HCT116 (cell line): ENCODE measurements at regions of chr1 and their contacts with region 1.

Region 1: GRCh38 chr1:44721485-44722361 is 9.2 kb downstream of the RNU5D-1 start:
- DNase-seq: peak; percentile 99
- ATAC-seq: peak; percentile 91
- H3K4me3 ChIP-seq: no peak overlapping the region
- H3K27ac ChIP-seq: peak overlapping the region; percentile 75
- H3K4me1 ChIP-seq: peaks cover 10 to 33% of the 10 kb centered on the region in 2 experiments
- H3K27me3 ChIP-seq: no peaks in the 10 kb centered on the region
- CTCF ChIP-seq: no peak
- POLR2A ChIP-seq: peak; percentile 100
- RAD21 ChIP-seq: no peak

Region 2: DNA sequence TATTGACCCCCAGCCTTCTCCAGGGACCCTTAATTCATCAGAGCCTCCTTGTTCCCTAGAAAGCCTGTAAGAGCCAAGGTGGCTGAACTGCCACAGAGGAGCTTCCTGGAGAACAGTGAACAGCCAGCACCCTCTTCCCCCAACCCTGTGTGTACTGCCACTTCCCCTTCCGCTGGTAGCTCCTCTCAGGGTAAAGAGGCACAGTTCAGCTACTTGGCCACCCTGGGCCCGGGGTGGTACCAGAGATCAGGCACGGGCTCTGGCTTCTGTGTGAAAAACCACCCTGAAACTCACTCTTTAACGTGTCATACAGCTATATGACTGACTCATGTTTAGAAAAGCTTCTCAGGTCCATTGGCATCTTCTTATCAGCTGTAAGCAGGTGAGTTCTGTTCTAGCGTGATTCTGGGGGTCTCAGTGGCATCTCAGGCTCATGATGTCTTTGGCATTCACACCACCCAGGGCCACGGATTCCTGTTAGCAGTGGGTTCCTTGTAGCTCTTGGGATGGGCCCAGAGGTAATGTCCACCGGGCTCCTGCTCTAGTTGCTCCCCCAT is 24.9 kb before region 1 on chr1:
- CTCF ChIA-PET with region 1: no interaction called
- POLR2A ChIA-PET with region 1: interaction called, 39 read pairs
- RAD21 ChIA-PET with region 1: no interaction called
- intact Hi-C with region 1: no loop called
- DNase-seq: no peak
- ATAC-seq: no peak
- H3K4me3 ChIP-seq: no peak overlapping the region
- H3K27ac ChIP-seq: no peak overlapping the region
- H3K4me1 ChIP-seq: peaks cover 0 to 27% of the 10 kb centered on the region in 2 experiments; a peak in 2 of 4 replicates
- H3K27me3 ChIP-seq: no peaks in the 10 kb centered on the region
- CTCF ChIP-seq: no peak
- POLR2A ChIP-seq: no peak
- RAD21 ChIP-seq: no peak

Region 3: GRCh38 chr1:44775078-44775929 is 53.6 kb after region 1 on chr1 and contains the start of gene RPS8:
- CTCF ChIA-PET with region 1: interaction called, 3 read pairs
- POLR2A ChIA-PET with region 1: interaction called, 20 read pairs
- RAD21 ChIA-PET with region 1: no interaction called
- intact Hi-C with region 1: no loop called
- DNase-seq: peak; percentile 85
- ATAC-seq: peak; percentile 76
- H3K4me3 ChIP-seq: peak within 1 kb of the TSS; percentile 92 to 99
- H3K27ac ChIP-seq: peak within 1 kb of the TSS; percentile 86
- H3K4me1 ChIP-seq: peaks cover 10 to 24% of the 10 kb centered on the region in 2 experiments
- H3K27me3 ChIP-seq: no peaks in the 10 kb centered on the region
- CTCF ChIP-seq: no peak
- POLR2A ChIP-seq: peak; percentile 97
- RAD21 ChIP-seq: no peak
- total RNA-seq, gene RPS8: 2,296 TPM

Region 4: GRCh38 chr1:44807262-44808062 is 85.7 kb after region 1 on chr1 and contains the start of gene DYNLT4:
- CTCF ChIA-PET with region 1: no interaction called
- POLR2A ChIA-PET with region 1: interaction called, 42 read pairs
- RAD21 ChIA-PET with region 1: no interaction called
- intact Hi-C with region 1: no loop called
- DNase-seq: peak; percentile 98
- ATAC-seq: peak; percentile 74
- H3K4me3 ChIP-seq: peak within 1 kb of the TSS; percentile 30 to 32
- H3K27ac ChIP-seq: peak within 1 kb of the TSS; percentile 98
- H3K4me1 ChIP-seq: peaks cover 58 to 96% of the 10 kb centered on the region in 2 experiments
- H3K27me3 ChIP-seq: no peaks in the 10 kb centered on the region
- CTCF ChIP-seq: no peak
- POLR2A ChIP-seq: peak; percentile 58
- RAD21 ChIP-seq: no peak
- total RNA-seq, gene DYNLT4: 0.96 TPM

Region 5: DNA sequence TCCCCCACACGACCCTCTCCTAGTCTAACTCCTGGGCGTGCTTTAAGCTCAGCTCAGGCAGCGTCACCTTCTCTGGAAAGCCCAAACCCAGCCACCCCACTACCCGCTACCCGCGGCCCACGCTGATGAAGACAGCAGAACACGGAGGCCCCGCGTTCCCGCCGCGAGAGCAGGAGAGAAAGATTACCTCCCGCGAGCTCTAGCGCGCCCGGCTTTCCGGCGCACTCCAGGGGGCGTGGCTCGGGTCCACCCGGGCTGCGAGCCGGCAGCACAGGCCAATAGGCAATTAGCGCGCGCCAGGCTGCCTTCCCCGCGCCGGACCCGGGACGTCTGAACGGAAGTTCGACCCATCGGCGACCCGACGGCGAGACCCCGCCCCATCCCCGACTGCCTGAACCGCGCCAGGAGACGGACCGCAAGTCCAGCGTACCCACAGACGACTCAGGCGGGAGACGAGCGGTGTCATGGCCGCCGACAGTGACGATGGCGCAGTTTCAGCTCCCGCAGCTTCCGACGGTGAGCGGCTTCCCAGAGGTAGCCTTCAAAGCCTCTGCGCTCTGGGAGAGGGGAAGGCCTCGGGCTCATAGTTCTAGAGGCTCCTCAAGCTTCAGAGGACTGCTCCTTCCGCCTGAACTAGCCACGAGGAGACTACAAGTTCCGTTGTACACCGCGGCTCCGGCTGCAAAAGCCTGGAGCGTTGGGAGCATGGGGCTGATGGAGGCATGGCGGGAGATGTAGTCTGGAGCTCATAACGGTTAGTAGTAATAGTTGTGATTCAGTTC is 618.3 kb after region 1 on chr1 and contains the starts of genes MUTYH and TOE1:
- CTCF ChIA-PET with region 1: no interaction called
- POLR2A ChIA-PET with region 1: interaction called, 11 read pairs
- RAD21 ChIA-PET with region 1: no interaction called
- intact Hi-C with region 1: no loop called
- DNase-seq: peak; percentile 79
- ATAC-seq: peak; percentile 90
- H3K4me3 ChIP-seq: peak within 1 kb of the TSS; percentile 93 to 94
- H3K27ac ChIP-seq: peak within 1 kb of the TSS; percentile 82
- H3K4me1 ChIP-seq: peaks cover 21 to 50% of the 10 kb centered on the region in 2 experiments
- H3K27me3 ChIP-seq: no peaks in the 10 kb centered on the region
- CTCF ChIP-seq: no peak
- POLR2A ChIP-seq: peak; percentile 46
- RAD21 ChIP-seq: no peak
- total RNA-seq, gene MUTYH: 44.8 TPM
- total RNA-seq, gene TOE1: 11.5 TPM

Region 6: DNA sequence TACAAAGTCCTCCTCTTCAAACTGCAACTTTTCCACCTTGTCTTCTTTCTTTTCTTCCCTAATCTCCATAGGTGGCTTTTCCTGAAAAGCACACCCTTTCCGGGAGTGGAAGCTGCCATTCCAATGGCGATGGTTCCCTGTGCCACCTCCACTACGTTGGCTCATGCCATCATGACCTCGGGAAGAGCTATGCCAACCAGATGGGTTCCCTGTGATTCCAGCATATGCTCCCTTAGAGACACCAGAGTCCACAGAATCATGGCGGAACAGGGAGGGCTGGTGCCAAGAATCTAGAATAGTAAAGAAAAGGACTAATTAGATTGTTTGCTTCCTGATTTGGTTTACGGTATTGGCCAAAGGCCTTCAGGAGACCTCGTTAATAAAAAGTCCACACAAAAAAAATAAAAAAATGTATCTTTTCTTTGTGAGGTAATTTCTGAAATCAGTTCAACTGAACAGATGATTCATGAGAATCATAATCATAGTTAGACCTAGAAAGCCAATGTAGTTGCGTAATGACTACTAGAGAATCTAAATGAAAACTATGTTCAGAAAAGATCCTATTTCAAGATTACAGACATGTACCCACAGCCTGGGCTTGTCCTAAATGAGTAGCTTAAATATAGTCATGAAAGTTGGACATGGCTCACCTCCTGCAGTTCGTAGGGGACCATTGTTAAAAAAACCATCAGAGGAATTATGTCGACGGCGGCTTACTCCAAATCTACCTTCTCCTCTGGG is 933.0 kb after region 1 on chr1:
- CTCF ChIA-PET with region 1: no interaction called
- POLR2A ChIA-PET with region 1: no interaction called
- RAD21 ChIA-PET with region 1: no interaction called
- intact Hi-C with region 1: no loop called
- DNase-seq: no peak
- ATAC-seq: no peak
- H3K4me3 ChIP-seq: no peak overlapping the region
- H3K27ac ChIP-seq: no peak overlapping the region
- H3K4me1 ChIP-seq: no peaks in the 10 kb centered on the region
- H3K27me3 ChIP-seq: no peaks in the 10 kb centered on the region
- CTCF ChIP-seq: no peak
- POLR2A ChIP-seq: no peak
- RAD21 ChIP-seq: no peak